Aorta (tissue), 5 donors: ENCODE measurements at regions of chr19 and their contacts with region 1.

Region 1: GRCh38 chr19:10580979-10581631 is 6.0 kb downstream of the AP1M2 start:
- DNase-seq: peak; percentile 89 to 95
- ATAC-seq: peak; percentile 94
- H3K4me3 ChIP-seq: no peak overlapping the region
- H3K27ac ChIP-seq: no peak overlapping the region
- H3K4me1 ChIP-seq: no peaks in the 10 kb centered on the region
- H3K27me3 ChIP-seq: no peaks in the 10 kb centered on the region

Region 2: DNA sequence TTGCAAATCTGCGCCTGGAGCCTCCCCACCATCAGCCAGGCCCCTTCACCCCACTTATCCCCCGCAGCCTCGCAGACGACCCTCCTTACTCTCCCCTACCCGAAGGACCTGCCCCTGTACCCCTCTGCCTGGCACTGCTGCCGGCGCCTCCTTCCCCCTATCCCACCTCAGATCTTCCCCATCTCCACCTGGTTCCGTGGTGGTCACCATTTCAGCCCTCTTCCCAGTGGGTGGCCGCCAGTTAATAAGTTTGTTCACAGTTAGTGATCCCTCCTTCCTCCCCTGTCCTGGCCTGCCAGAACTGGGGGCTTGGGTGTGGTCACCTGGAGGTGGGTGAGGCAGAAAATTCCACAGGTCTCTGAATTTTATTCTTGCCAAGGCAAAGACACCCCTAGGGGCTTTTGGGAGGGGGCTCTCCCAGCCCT is 44.7 kb after region 1 on chr19:
- intact Hi-C with region 1: no loop called
- DNase-seq: no peak
- ATAC-seq: no peak
- H3K4me3 ChIP-seq: peak overlapping the region in 1 of 2 donors; percentile 52
- H3K27ac ChIP-seq: no peak overlapping the region
- H3K4me1 ChIP-seq: no peaks in the 10 kb centered on the region
- H3K27me3 ChIP-seq: no peaks in the 10 kb centered on the region

Region 3: DNA sequence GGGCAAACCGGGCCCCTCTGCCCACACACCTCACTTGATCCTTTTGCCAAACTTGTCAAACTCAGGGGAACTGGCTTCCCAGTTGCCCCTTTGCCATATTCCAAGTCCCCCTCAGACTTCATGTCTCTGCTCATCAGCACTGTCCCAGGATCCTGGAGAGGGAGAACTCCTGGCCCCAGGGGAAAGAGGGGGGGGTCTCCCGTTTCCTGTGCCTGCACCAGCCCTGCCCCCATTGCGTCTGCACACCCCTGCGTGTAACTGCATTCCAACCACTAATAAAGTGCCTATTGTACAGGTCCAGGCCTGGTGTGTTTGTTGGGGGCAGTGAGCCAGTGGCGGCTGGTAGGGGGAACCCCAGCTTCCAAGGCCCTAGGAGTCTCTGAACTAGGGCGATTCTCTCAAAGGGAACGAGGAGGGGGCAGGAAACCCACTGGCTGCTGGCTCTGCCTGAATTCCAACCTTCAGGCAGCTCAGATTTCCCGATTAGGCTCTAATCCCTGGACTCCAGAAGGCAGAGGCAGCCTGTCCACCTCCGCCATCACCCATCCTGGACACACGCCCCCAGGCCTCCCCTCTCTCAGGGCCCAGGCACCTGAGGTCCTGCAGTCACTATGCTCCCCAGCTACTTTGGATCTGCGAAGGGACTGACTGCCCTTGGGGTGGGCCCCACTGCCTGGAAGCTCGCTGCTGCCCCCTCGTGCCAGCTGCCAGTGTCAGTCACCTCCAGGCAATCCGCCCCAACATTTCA is 63.3 kb after region 1 on chr19:
- intact Hi-C with region 1: loop called (anchors 1 to 2 kb)
- DNase-seq: peak; percentile 88 to 96
- ATAC-seq: peak; percentile 94
- H3K4me3 ChIP-seq: no peak overlapping the region
- H3K27ac ChIP-seq: no peak overlapping the region
- H3K4me1 ChIP-seq: peaks cover 0 to 4% of the 10 kb centered on the region in 2 donors
- H3K27me3 ChIP-seq: no peaks in the 10 kb centered on the region

Region 4: DNA sequence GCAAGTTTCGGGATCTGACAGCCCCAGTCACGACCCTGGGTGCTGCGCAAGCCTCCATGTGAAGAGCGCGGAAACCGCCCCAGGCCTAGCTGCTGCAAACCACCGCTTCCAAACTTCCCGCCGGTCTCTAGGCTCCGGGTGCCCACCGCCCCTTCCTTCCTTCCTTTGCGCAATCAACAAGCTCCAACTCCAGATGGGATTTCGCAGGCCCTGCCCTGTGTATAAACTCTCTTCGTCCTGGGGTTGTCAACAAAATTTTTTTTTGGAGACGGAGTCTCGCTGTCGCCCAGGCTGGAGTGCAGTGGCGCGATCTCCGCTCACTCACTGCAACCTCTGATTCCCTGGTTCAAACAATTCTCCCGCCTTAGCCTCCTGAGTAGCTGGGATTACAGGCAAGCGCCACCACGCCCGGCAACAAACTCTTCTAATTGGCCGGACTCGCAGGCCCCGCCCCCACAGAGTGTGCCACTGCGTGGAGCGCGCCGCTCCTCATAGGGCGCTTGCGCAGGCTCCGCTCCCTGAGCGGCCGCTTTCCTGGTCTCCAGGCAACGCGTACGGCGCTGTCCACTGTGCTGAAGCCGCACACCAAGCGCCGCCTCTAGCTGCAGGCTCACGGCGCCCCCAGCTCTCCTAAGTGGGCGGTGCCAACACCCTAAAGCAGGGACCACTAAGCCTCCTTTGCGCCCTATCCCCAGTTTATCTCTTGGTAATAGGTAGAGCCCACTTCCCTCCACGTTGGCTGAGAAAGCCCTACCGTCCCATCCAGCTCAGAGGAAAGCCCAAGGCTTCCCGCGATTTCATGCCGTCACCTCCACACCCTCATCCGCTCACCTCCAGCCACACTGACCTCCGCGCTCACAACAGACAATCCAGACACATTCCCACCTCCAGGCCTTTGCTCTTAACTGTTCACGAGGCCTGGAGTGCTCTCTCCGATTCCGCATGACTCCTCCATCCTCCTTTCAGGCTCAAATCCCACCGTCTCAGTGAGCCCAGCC is 114.6 kb after region 1 on chr19:
- intact Hi-C with region 1: loop called (anchors 2 to 5 kb)
- DNase-seq: peak; percentile 96
- ATAC-seq: peak; percentile 98
- H3K4me3 ChIP-seq: no peak overlapping the region
- H3K27ac ChIP-seq: no peak overlapping the region
- H3K4me1 ChIP-seq: no peaks in the 10 kb centered on the region
- H3K27me3 ChIP-seq: no peaks in the 10 kb centered on the region